Caco-2 (cell line): ENCODE measurements at regions of chr6 and their contacts with region 1.

Region 1: GRCh38 chr6:72580281-72580940 is 41.5 kb upstream of the KCNQ5 start:
- DNase-seq: peak; percentile 37 to 56
- H3K4me3 ChIP-seq: no peak overlapping the region
- H3K4me3 Mint-ChIP-seq: no peak overlapping the region
- H3K27ac Mint-ChIP-seq: no peak overlapping the region
- H3K4me1 ChIP-seq: no peaks in the 10 kb centered on the region
- H3K4me1 Mint-ChIP-seq: no peaks in the 10 kb centered on the region
- H3K27me3 ChIP-seq: no peaks in the 10 kb centered on the region
- H3K27me3 Mint-ChIP-seq: no peaks in the 10 kb centered on the region
- CTCF ChIP-seq: peak; percentile 51 to 75

Region 2: DNA sequence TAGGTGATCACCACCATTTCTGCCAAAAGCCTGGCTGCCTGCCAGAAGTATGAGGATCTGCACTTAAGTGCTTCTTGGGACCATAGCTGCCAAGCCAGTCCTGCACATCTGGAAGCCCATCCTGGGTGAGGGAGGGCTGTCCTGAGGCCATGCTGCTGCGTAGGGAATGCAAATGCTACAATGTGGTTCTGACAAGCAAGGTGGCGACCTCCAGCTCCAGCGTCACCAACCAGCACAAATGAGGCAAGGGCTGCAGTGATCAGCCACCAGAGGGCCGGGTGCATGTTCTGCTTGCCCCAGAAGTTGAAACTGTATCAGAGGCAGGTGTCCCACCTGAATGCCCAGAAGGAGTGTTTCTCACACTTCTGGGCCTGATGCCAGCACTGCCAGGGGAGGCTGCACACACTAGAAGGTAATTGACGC is 57.7 kb before region 1 on chr6:
- CTCF ChIA-PET with region 1: interaction called, 15 read pairs
- POLR2A ChIA-PET with region 1: no interaction called
- intact Hi-C with region 1: loop called (anchors 5 kb)
- DNase-seq: peak; percentile 55 to 58
- H3K4me3 ChIP-seq: no peak overlapping the region
- H3K4me3 Mint-ChIP-seq: no peak overlapping the region
- H3K27ac Mint-ChIP-seq: no peak overlapping the region
- H3K4me1 ChIP-seq: no peaks in the 10 kb centered on the region
- H3K4me1 Mint-ChIP-seq: no peaks in the 10 kb centered on the region
- H3K27me3 ChIP-seq: no peaks in the 10 kb centered on the region
- H3K27me3 Mint-ChIP-seq: no peaks in the 10 kb centered on the region
- CTCF ChIP-seq: peak; percentile 44 to 65

Region 3: DNA sequence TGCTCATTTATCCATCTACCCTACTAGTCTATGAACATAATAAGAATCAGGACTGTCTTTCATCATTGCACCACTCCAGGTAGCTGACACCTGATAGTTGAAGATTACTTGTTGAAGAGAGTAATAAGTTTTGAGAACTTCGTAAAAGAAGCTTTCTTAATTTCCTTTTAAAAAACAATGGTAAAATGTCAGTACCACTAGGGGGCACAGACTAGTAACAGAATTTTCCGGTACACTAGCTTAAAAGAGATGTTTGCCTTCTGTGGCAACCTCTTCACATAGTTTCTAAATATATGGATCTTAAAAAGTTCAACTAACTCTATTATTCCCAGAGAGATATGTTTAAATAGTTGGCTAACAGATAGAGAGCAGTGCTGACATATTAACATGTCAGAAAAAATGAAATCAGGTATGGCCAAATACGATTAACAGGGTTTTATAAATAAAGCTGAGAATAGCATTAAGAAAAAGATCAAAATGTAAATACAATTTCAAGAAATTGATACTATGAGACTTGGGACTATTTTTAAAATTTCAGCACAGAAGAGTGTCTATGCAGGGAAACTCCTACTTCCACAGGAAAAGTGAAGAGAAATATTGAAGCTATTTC is 36.1 kb after region 1 on chr6:
- CTCF ChIA-PET with region 1: no interaction called
- POLR2A ChIA-PET with region 1: no interaction called
- intact Hi-C with region 1: no loop called
- DNase-seq: no peak
- H3K4me3 ChIP-seq: no peak overlapping the region
- H3K4me3 Mint-ChIP-seq: no peak overlapping the region
- H3K27ac Mint-ChIP-seq: no peak overlapping the region
- H3K4me1 ChIP-seq: no peaks in the 10 kb centered on the region
- H3K4me1 Mint-ChIP-seq: peaks cover 7% of the 10 kb centered on the region
- H3K27me3 ChIP-seq: no peaks in the 10 kb centered on the region
- H3K27me3 Mint-ChIP-seq: peaks cover 19% of the 10 kb centered on the region
- CTCF ChIP-seq: peak; percentile 52 to 57